CD4-positive, alpha-beta memory T cell (primary cell): ENCODE measurements at regions of chr14 and their contacts with region 1.

Region 1: DNA sequence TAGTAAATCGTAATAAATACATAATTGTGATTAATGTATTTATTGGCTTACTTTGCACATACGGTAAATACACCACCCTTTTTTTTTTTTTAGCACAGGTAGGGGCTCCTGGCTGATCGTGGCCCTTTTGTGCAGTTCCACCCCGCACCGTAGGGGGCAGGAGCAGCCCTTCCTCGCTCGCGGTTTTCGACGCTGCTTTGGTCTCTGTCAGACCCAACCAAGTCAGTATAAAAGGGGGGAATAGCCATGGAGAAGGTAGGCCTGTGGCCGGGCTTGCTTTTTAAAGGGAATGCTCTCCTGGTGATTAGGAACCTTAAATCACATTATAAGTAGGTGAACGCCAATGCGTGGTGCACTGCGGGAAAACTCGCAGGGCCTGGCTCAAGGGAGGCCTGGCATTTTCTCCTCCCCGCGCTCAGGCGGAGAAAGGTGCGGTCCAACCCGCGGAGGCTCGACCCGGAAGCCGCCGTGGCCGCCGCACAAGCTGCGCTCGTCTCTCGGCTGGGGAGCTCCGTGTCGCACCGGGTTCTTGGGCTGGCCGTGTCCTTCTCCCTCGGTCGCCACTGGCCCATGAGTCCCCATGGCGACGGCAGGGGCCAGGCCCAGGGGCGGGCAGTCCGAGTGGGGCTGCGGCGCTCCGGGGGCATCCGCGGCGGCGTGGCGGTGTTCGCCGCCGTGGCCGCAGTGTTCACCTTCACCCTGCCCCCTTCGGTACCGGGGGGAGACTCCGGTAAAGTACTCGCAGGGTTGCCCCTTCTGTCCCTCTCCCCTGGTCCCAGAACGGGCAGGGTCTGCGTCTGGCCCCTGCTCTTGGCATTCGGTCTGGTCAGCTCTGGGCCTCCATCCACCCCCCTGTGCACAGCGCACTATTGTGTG is at the start of gene TMEM260:
- DNase-seq: peak; percentile 90 to 94 (median 93)
- H3K4me3 ChIP-seq: peak within 1 kb of the TSS; percentile 92 to 94
- H3K4me3 Mint-ChIP-seq: peak within 1 kb of the TSS; percentile 90 to 99 (median 92)
- H3K27ac ChIP-seq: peak within 1 kb of the TSS; percentile 83
- H3K27ac Mint-ChIP-seq: peak within 1 kb of the TSS in 6 of 7 donors; percentile 91 to 99 (median 97)
- H3K4me1 ChIP-seq: peaks cover 41% of the 10 kb centered on the region
- H3K4me1 Mint-ChIP-seq: peaks cover 30 to 48% (median 35%) of the 10 kb centered on the region in 4 donors
- H3K27me3 ChIP-seq: no peaks in the 10 kb centered on the region
- H3K27me3 Mint-ChIP-seq: no peaks in the 10 kb centered on the region
- total RNA-seq, gene TMEM260: 33.6 to 37.0 TPM

Region 2: DNA sequence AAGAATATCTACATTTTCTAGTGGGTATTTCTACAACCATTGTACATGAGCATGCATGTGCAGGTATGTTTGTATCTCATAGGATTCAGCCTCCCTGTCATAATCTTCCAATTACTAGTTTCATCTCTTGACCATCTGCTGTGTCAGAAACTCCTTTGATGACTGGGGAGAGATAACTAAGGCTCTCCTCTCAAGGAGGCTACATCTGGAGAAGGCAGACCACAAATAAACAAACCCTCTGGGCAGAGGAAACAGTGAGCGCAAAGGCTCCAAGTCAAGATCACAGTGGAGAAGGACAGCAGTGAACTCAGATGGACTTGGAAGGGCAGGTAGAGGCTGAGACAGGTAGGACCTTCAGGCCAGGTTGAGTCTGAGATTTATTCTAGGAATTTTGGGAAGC is 294.9 kb before region 1 on chr14:
- CTCF ChIA-PET with region 1: no interaction called
- POLR2A ChIA-PET with region 1: no interaction called
- intact Hi-C with region 1: no loop called
- DNase-seq: no peak
- H3K4me3 ChIP-seq: no peak overlapping the region
- H3K4me3 Mint-ChIP-seq: no peak overlapping the region
- H3K27ac ChIP-seq: no peak overlapping the region
- H3K27ac Mint-ChIP-seq: no peak overlapping the region
- H3K4me1 ChIP-seq: no peaks in the 10 kb centered on the region
- H3K4me1 Mint-ChIP-seq: no peaks in the 10 kb centered on the region
- H3K27me3 ChIP-seq: no peaks in the 10 kb centered on the region
- H3K27me3 Mint-ChIP-seq: no peaks in the 10 kb centered on the region

Region 3: GRCh38 chr14:56590535-56590960 is 11.0 kb after region 1 on chr14:
- CTCF ChIA-PET with region 1: interaction called, 30 read pairs
- POLR2A ChIA-PET with region 1: interaction called, 12 read pairs
- intact Hi-C with region 1: no loop called
- DNase-seq: no peak
- H3K4me3 ChIP-seq: no peak overlapping the region
- H3K4me3 Mint-ChIP-seq: no peak overlapping the region
- H3K27ac ChIP-seq: no peak overlapping the region
- H3K27ac Mint-ChIP-seq: no peak overlapping the region
- H3K4me1 ChIP-seq: peaks cover 4% of the 10 kb centered on the region
- H3K4me1 Mint-ChIP-seq: peaks cover 0 to 7% (median 5%) of the 10 kb centered on the region in 4 donors
- H3K27me3 ChIP-seq: no peaks in the 10 kb centered on the region
- H3K27me3 Mint-ChIP-seq: no peaks in the 10 kb centered on the region

Region 4: GRCh38 chr14:57390028-57390805 is 810.6 kb after region 1 on chr14 and contains the start of gene NAA30:
- CTCF ChIA-PET with region 1: interaction called, 3 read pairs
- POLR2A ChIA-PET with region 1: no interaction called
- intact Hi-C with region 1: loop called (anchors 1 kb)
- DNase-seq: peak; percentile 93 to 98 (median 96)
- H3K4me3 ChIP-seq: peak within 1 kb of the TSS; percentile 50 to 85
- H3K4me3 Mint-ChIP-seq: peak within 1 kb of the TSS; percentile 90 to 98 (median 94)
- H3K27ac ChIP-seq: peak within 1 kb of the TSS; percentile 83
- H3K27ac Mint-ChIP-seq: peak within 1 kb of the TSS; percentile 88 to 97 (median 96)
- H3K4me1 ChIP-seq: peaks cover 42% of the 10 kb centered on the region
- H3K4me1 Mint-ChIP-seq: peaks cover 30 to 53% (median 42%) of the 10 kb centered on the region in 4 donors
- H3K27me3 ChIP-seq: no peaks in the 10 kb centered on the region
- H3K27me3 Mint-ChIP-seq: no peaks in the 10 kb centered on the region
- total RNA-seq, gene NAA30: 18.6 to 21.8 TPM